Left lung (tissue), 14 donors: ENCODE measurements at regions of chr10 and their contacts with region 1.

Region 1: DNA sequence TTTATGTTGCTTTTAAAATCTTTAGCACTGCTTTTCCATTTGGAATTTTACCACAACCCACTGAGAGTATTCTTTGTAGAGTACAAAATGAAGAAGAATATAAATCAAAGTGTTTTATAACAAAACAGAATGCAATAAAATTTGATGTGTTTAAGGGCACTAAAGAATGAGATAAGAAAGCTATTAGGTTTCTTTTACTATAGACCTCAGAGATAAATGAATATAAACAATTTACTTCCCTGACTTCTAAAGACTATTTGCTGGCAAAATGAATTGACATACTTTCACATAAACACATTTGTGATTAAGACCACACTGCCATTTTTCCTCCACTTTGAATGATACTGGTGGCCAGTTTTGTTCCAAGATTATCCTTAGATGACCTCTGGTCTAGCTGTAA is 124.5 kb downstream of the ITGA8 start:
- DNase-seq: no peak
- ATAC-seq: no peak
- H3K4me3 ChIP-seq: no peak overlapping the region
- H3K27ac ChIP-seq: no peak overlapping the region
- H3K4me1 ChIP-seq: no peaks in the 10 kb centered on the region
- H3K27me3 ChIP-seq: no peaks in the 10 kb centered on the region
- CTCF ChIP-seq: no peak

Region 2: GRCh38 chr10:15504101-15504840 is 91.0 kb before region 1 on chr10:
- intact Hi-C with region 1: no loop called
- DNase-seq: peak in 1 of 4 donors; percentile 44
- ATAC-seq: no peak
- H3K4me3 ChIP-seq: no peak overlapping the region
- H3K27ac ChIP-seq: no peak overlapping the region
- H3K4me1 ChIP-seq: no peaks in the 10 kb centered on the region
- H3K27me3 ChIP-seq: peaks cover 0 to 5% of the 10 kb centered on the region in 2 donors
- CTCF ChIP-seq: no peak

Region 3: DNA sequence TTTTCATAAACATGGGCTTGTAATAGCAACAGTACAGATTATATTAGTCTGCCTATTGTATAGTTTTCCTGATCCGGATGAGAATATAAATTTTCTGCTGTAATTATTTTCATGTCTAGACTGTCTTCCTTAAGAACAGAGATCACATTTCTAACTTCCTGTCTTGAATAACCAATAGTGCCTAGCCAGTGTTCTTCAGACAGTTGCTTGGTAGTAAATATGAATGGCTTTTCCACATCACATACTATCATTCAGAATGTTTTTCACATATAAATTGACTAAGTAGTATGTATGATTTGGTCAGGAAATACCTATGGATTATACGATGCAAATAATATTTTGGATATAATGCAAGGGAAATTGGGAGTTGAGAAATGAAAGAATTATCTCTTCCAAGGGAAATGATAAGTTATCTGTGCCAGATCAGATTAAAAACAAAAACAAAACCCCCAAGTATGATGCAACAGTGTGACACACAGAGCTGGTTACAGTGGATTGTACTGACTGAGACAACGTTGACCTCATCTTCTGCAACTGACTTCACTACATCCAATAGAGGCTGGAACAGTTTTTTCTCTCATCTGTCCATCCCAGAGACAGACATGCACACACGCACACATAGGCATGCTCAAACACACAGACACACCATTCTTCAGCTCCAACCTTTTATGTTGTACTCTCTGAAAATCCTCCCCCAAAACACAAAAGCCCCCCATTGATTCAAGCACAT is 108.1 kb after region 1 on chr10:
- intact Hi-C with region 1: loop called in 1 of 2 experiments (anchors 10 kb)
- DNase-seq: peak in 1 of 4 donors; percentile 37
- ATAC-seq: no peak
- H3K4me3 ChIP-seq: no peak overlapping the region
- H3K27ac ChIP-seq: no peak overlapping the region
- H3K4me1 ChIP-seq: no peaks in the 10 kb centered on the region
- H3K27me3 ChIP-seq: no peaks in the 10 kb centered on the region
- CTCF ChIP-seq: no peak